Right cardiac atrium (tissue), 5 donors: ENCODE measurements at regions of chr1 and their contacts with region 1.

Region 1: GRCh38 chr1:101288491-101288944 is 51.7 kb downstream of the S1PR1 start:
- DNase-seq: peak; percentile 55 to 80 (median 57)
- ATAC-seq: peak; percentile 89 to 92
- H3K4me3 ChIP-seq: peak overlapping the region; percentile 39
- H3K27ac ChIP-seq: no peak overlapping the region
- H3K4me1 ChIP-seq: peaks cover 2% of the 10 kb centered on the region
- H3K27me3 ChIP-seq: no peaks in the 10 kb centered on the region

Region 2: DNA sequence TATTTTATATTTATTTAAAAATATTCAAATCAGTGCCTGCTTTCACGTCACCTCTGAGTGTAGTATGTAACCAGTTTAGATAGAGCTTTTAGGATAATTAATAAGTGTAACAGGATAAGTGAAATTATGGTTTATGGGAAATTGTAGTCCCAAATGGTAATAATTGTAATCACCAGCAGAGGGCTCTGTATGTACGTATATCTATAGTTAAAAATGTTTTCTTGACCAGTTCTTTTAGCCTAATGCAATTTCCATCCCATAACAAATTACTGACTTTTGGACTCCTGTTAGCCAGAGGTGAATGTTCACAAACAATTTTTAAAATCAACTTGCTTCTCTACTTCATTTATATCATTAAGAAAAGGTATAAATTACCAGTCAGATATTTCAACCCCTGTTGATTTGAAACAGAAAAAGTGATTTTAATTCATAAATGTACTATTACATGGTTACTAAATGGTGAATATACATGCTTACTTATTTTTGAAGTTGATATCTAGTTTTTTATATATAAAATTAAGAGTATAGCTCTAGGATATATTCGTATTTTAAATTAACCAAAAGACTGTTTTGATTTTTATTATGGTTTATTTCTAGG is 367.3 kb before region 1 on chr1:
- intact Hi-C with region 1: loop called in 3 of 4 experiments (anchors 5 kb)
- DNase-seq: no peak
- ATAC-seq: peak in 1 of 2 donors; percentile 36
- H3K4me3 ChIP-seq: no peak overlapping the region
- H3K27ac ChIP-seq: no peak overlapping the region
- H3K4me1 ChIP-seq: no peaks in the 10 kb centered on the region
- H3K27me3 ChIP-seq: no peaks in the 10 kb centered on the region

Region 3: GRCh38 chr1:100928128-100928527 is 360.4 kb before region 1 on chr1:
- intact Hi-C with region 1: loop called in 2 of 4 experiments (anchors 5 kb)
- DNase-seq: no peak
- ATAC-seq: no peak
- H3K4me3 ChIP-seq: no peak overlapping the region
- H3K27ac ChIP-seq: no peak overlapping the region
- H3K4me1 ChIP-seq: no peaks in the 10 kb centered on the region
- H3K27me3 ChIP-seq: no peaks in the 10 kb centered on the region

Region 4: DNA sequence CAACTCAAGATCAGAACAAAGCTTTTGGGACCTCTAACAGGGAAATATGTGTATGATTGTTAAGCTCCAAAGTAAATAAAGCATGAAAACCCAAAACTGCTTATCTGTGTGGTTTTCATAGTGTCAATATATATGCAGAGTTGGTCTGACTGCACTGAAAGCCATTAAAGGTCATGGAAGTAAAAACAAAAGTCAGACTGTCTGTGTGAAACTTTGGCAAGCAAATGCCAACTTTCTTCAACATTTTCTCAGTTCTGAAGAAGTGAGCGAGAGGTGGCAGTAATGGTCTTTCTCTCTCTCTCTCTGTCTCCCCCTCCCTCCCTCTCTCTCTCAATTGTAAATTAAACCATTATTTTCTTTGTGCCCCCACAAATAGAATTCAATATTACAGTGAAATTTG is 151.8 kb before region 1 on chr1:
- intact Hi-C with region 1: loop called in 2 of 4 experiments (anchors 5 to 10 kb)
- DNase-seq: no peak
- ATAC-seq: peak; percentile 62 to 66
- H3K4me3 ChIP-seq: no peak overlapping the region
- H3K27ac ChIP-seq: no peak overlapping the region
- H3K4me1 ChIP-seq: peaks cover 2% of the 10 kb centered on the region
- H3K27me3 ChIP-seq: no peaks in the 10 kb centered on the region

Region 5: GRCh38 chr1:101238681-101239094 is 49.8 kb before region 1 on chr1:
- intact Hi-C with region 1: loop called in 2 of 4 experiments (anchors 5 kb)
- DNase-seq: peak; percentile 89 to 96 (median 96)
- ATAC-seq: peak; percentile 60 to 63
- H3K4me3 ChIP-seq: peak overlapping the region; percentile 95
- H3K27ac ChIP-seq: peak overlapping the region; percentile 87
- H3K4me1 ChIP-seq: no peaks in the 10 kb centered on the region
- H3K27me3 ChIP-seq: no peaks in the 10 kb centered on the region